MCF 10A (cell line): ENCODE measurements at regions of chr2 and their contacts with region 1.

Region 1: DNA sequence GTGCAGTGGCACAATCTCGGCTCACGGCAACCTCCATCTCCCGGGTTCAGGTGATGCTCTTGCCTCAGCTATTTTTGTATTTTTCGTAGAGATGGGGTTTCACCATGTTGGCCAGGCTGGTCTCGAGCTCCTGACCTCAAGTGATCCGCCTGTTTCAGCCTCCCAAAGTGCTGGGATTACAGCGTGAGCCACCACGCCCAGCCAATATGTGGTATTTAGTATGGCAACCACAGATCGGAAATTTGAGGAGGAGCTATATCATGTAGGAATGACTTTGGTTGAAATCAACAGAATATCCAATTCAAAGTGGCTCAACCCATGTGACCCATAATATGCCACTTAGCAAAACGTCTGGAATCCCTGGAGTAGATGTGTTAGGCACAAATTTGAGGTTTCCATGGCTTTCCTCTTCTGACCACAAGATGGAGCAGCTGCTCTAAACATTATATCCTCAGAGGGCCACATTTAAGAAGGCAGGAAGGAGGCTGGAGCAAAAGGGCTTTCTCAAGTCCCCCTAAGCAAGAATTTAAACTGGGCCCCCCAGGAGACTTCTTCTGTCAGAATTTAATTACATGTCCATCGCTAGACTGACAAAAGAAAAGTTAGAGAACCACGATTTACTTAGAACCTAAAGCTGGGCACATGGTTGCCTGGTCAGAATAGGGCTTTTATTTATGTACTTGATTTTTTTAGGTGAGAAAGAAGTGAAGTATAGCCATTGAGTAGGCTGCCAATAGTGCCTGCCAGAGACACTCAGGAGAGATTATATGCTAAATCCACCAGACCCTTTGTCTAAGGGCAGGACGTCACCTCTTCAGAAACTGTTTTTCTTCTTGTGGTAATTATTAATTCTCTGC is 49.6 kb upstream of the ITSN2 start:
- DNase-seq: peak; percentile 77
- H3K4me3 Mint-ChIP-seq: no peak overlapping the region
- H3K27ac Mint-ChIP-seq: no peak overlapping the region
- H3K4me1 Mint-ChIP-seq: no peaks in the 10 kb centered on the region
- H3K27me3 Mint-ChIP-seq: no peaks in the 10 kb centered on the region
- CTCF ChIP-seq: peak; percentile 67

Region 2: DNA sequence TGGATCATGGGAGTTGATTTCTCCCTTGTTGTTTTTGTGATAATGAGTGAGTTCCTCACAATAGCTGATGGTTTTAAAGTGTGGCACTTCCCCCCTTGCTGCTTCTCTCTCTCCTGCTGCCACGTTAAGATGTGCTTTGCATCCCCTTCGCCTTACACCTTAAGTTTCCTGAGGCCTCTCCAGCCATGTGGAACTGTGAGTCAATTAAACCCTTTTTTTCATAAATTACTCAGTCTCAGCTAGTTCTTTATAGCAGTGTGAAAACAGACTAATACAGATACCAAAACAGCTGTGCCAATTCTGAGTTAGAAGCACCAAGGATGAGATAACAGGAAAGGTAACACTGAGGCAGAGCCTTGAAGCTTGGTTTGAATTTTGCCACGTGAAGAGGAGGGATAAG is 94.3 kb before region 1 on chr2:
- CTCF ChIA-PET with region 1: no interaction called
- POLR2A ChIA-PET with region 1: no interaction called
- intact Hi-C with region 1: no loop called
- DNase-seq: no peak
- H3K4me3 Mint-ChIP-seq: no peak overlapping the region
- H3K27ac Mint-ChIP-seq: no peak overlapping the region
- H3K4me1 Mint-ChIP-seq: no peaks in the 10 kb centered on the region
- H3K27me3 Mint-ChIP-seq: no peaks in the 10 kb centered on the region
- CTCF ChIP-seq: no peak

Region 3: GRCh38 chr2:24399434-24400206 is 10.3 kb before region 1 on chr2:
- CTCF ChIA-PET with region 1: interaction called, 13 read pairs
- POLR2A ChIA-PET with region 1: no interaction called
- intact Hi-C with region 1: no loop called
- DNase-seq: no peak
- H3K4me3 Mint-ChIP-seq: no peak overlapping the region
- H3K27ac Mint-ChIP-seq: no peak overlapping the region
- H3K4me1 Mint-ChIP-seq: peaks cover 5% of the 10 kb centered on the region
- H3K27me3 Mint-ChIP-seq: no peaks in the 10 kb centered on the region
- CTCF ChIP-seq: no peak

Region 4: GRCh38 chr2:24421668-24422067 is 11.7 kb after region 1 on chr2:
- CTCF ChIA-PET with region 1: interaction called, 26 read pairs
- POLR2A ChIA-PET with region 1: interaction called, 4 read pairs
- intact Hi-C with region 1: no loop called
- DNase-seq: peak; percentile 75
- H3K4me3 Mint-ChIP-seq: no peak overlapping the region
- H3K27ac Mint-ChIP-seq: no peak overlapping the region
- H3K4me1 Mint-ChIP-seq: no peaks in the 10 kb centered on the region
- H3K27me3 Mint-ChIP-seq: no peaks in the 10 kb centered on the region
- CTCF ChIP-seq: peak; percentile 39

Region 5: DNA sequence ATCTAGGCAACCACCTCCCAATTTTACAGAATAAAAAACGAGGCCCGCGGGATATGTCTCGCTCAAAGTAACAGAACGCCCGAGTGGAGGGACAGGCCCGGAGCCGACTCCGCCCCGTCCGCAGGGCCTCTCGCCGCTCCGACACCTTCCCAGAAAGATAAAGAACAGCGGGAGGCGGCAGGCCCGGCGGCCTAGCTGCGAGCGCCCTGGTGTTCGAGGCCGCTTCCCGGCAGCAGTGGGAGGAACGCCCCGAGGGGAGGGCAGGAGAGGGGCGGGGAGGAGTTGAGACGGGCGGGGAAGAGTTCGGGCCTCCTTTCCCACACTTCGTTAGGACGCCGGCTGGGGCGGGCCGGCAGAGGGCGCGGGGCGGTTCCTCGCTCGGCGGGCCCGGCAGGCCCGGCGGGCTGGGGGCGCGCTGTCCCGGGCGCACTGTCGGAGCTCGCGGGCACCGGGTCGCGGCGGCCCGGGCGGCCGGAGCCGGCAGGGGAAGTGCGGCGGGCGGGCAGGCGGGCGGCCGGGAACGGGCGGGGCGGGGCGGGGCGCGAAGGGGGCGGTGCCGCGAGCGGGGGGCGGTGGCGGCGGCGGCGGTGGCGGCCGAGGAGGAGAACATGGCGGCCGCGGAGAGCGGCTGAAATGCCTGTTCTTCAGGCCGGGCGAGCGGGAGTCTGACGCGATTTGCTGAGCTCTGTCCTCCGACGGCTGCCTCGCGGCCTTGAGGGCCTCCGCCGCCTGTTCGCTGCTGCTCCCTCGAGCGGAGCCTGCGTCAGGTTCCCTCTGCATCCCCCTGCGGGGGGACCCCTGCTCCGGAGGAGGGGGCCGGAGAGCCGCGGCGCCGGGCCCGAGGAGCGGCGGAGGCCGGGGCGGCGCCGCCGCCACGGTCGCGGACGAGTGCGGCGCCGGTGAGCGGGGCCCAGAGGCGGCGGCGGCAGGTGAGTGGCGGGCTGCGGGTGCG is 81.0 kb after region 1 on chr2 and contains the start of gene NCOA1:
- CTCF ChIA-PET with region 1: no interaction called
- POLR2A ChIA-PET with region 1: no interaction called
- intact Hi-C with region 1: no loop called
- DNase-seq: peak; percentile 88
- H3K4me3 Mint-ChIP-seq: peak within 1 kb of the TSS; percentile 83
- H3K27ac Mint-ChIP-seq: peak within 1 kb of the TSS; percentile 89
- H3K4me1 Mint-ChIP-seq: peaks cover 26% of the 10 kb centered on the region
- H3K27me3 Mint-ChIP-seq: no peaks in the 10 kb centered on the region
- CTCF ChIP-seq: no peak
- total RNA-seq, gene NCOA1: 15.4 and 15.8 TPM in 2 replicates

Region 6: GRCh38 chr2:24792874-24793760 is 383.2 kb after region 1 on chr2 and contains the starts of genes CENPO and PTRHD1:
- CTCF ChIA-PET with region 1: interaction called, 17 read pairs
- POLR2A ChIA-PET with region 1: interaction called, 4 read pairs
- intact Hi-C with region 1: no loop called
- DNase-seq: peak; percentile 96
- H3K4me3 Mint-ChIP-seq: peak within 1 kb of the TSS; percentile 90
- H3K27ac Mint-ChIP-seq: peak within 1 kb of the TSS; percentile 95
- H3K4me1 Mint-ChIP-seq: peaks cover 32% of the 10 kb centered on the region
- H3K27me3 Mint-ChIP-seq: no peaks in the 10 kb centered on the region
- CTCF ChIP-seq: peak; percentile 64
- total RNA-seq, gene CENPO: 10.6 and 14.9 TPM in 2 replicates
- total RNA-seq, gene PTRHD1: 23.1 and 35.1 TPM in 2 replicates

Region 7: GRCh38 chr2:24827321-24828237 is 417.7 kb after region 1 on chr2:
- CTCF ChIA-PET with region 1: interaction called, 108 read pairs
- POLR2A ChIA-PET with region 1: no interaction called
- intact Hi-C with region 1: loop called (anchors 1 kb)
- DNase-seq: peak; percentile 73
- H3K4me3 Mint-ChIP-seq: no peak overlapping the region
- H3K27ac Mint-ChIP-seq: no peak overlapping the region
- H3K4me1 Mint-ChIP-seq: no peaks in the 10 kb centered on the region
- H3K27me3 Mint-ChIP-seq: no peaks in the 10 kb centered on the region
- CTCF ChIP-seq: peak; percentile 58

Region 8: GRCh38 chr2:24971536-24972314 is 561.8 kb after region 1 on chr2 and contains the start of gene DNAJC27:
- CTCF ChIA-PET with region 1: interaction called, 6 read pairs
- POLR2A ChIA-PET with region 1: no interaction called
- intact Hi-C with region 1: loop called (anchors 2 kb)
- DNase-seq: peak; percentile 97
- H3K4me3 Mint-ChIP-seq: peak within 1 kb of the TSS; percentile 94
- H3K27ac Mint-ChIP-seq: peak within 1 kb of the TSS; percentile 100
- H3K4me1 Mint-ChIP-seq: no peaks in the 10 kb centered on the region
- H3K27me3 Mint-ChIP-seq: no peaks in the 10 kb centered on the region
- CTCF ChIP-seq: no peak
- total RNA-seq, gene DNAJC27: 5.8 and 7.1 TPM in 2 replicates

Region 9: DNA sequence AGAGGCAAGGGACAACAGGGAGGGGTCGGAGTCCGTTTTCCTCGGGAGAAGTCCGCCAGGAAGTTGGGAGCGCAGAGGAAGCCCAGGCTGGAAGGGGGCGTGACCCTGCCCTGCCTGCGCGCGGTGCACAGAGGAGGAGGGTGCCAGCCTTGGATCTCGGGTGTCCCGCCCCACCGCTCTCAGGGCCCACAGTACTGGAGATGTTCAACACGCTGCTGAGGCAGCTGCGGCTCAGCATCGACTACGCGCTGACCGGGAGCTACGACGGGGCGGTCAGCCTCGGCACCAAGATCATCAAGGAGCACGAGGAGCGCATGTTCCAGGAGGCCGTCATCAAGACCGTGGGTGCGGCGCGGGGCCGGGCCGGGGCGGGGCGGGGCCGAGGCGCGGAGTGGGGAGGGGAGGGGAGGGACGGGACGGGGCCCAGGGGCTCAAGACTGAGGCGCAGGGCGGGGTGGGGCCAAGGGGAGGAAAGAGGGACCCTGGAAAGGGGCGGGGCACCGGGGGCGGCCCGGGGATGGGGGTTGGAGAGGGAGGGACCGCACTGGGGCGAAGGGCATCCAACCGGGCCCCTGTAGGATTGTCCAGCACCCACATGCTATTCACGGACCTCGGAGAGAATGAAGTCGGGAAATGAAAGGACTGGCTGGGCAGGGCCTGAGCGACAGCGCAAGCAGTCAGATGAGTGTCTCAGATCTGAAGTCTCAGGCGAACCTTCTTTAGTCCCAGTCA is 721.8 kb after region 1 on chr2:
- CTCF ChIA-PET with region 1: interaction called, 42 read pairs
- POLR2A ChIA-PET with region 1: no interaction called
- intact Hi-C with region 1: loop called (anchors 1 kb)
- DNase-seq: no peak
- H3K4me3 Mint-ChIP-seq: no peak overlapping the region
- H3K27ac Mint-ChIP-seq: no peak overlapping the region
- H3K4me1 Mint-ChIP-seq: no peaks in the 10 kb centered on the region
- H3K27me3 Mint-ChIP-seq: peaks cover 67% of the 10 kb centered on the region
- CTCF ChIP-seq: no peak